Activated B cell treated with CpG ODN at 0.5 μM for 24 hours (primary cell): ENCODE measurements at regions of chr2 and their contacts with region 1.

Region 1: GRCh38 chr2:96760036-96760985 is at the start of gene CNNM4:
- DNase-seq: peak; percentile 89
- ATAC-seq: peak; percentile 91
- H3K4me3 Mint-ChIP-seq: peak within 1 kb of the TSS; percentile 90
- H3K27ac Mint-ChIP-seq: peak within 1 kb of the TSS; percentile 89
- H3K4me1 Mint-ChIP-seq: peaks cover 49% of the 10 kb centered on the region
- H3K27me3 Mint-ChIP-seq: no peaks in the 10 kb centered on the region
- CTCF ChIP-seq: no peak
- total RNA-seq, gene CNNM4: 7.4 and 10.0 TPM in 2 replicates

Region 2: DNA sequence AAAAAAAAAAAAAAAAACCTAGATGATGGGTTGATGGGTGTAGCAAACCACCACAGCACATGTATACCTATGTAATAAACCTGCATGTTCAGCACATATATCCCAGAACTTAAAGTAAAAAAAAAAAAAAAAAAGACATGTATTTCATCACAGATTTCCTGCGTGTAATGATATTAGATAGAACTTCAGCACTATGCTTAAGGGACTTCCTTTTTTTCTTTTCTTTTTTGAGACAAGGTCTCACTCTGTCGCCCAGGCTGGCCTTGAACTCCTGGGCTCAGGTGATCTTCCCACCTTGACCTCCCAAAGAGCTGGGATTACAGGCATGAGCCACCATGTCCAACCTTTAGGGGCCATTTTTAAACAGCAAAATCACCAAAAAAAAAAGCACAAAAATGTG is 297.2 kb before region 1 on chr2:
- CTCF ChIA-PET with region 1: no interaction called
- POLR2A ChIA-PET with region 1: no interaction called
- intact Hi-C with region 1: no loop called
- DNase-seq: no peak
- ATAC-seq: no peak
- H3K4me3 Mint-ChIP-seq: no peak overlapping the region
- H3K27ac Mint-ChIP-seq: no peak overlapping the region
- H3K4me1 Mint-ChIP-seq: no peaks in the 10 kb centered on the region
- H3K27me3 Mint-ChIP-seq: no peaks in the 10 kb centered on the region
- CTCF ChIP-seq: no peak

Region 3: DNA sequence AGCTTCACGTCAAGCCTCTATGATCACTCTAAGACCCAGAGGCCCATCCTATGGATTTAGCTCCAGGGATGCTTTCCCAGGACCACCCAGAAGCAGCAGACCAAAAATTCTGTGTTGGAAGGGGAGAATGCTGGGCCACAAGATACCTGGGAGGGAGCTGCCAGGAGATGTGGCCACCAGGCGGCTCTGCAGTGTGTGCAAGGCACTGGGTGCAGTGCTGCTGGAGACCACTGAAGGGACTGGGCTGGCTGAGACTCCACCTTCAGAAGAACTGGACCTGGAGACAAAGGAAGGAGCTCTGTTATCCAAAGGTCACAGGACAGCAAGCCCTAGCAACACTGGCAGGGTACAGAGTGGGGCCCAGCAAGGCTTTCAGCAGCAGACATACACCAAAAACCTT is 156.2 kb before region 1 on chr2:
- CTCF ChIA-PET with region 1: no interaction called
- POLR2A ChIA-PET with region 1: no interaction called
- intact Hi-C with region 1: no loop called
- DNase-seq: no peak
- ATAC-seq: no peak
- H3K4me3 Mint-ChIP-seq: no peak overlapping the region
- H3K27ac Mint-ChIP-seq: no peak overlapping the region
- H3K4me1 Mint-ChIP-seq: no peaks in the 10 kb centered on the region
- H3K27me3 Mint-ChIP-seq: no peaks in the 10 kb centered on the region
- CTCF ChIP-seq: no peak

Region 4: GRCh38 chr2:96638144-96639121 is 121.9 kb before region 1 on chr2 and contains the start of gene KANSL3:
- CTCF ChIA-PET with region 1: no interaction called
- POLR2A ChIA-PET with region 1: interaction called, 14 read pairs
- intact Hi-C with region 1: loop called (anchors 1 kb)
- DNase-seq: peak; percentile 94
- ATAC-seq: peak; percentile 90
- H3K4me3 Mint-ChIP-seq: peak within 1 kb of the TSS; percentile 93
- H3K27ac Mint-ChIP-seq: peak within 1 kb of the TSS; percentile 87
- H3K4me1 Mint-ChIP-seq: peaks cover 36% of the 10 kb centered on the region
- H3K27me3 Mint-ChIP-seq: no peaks in the 10 kb centered on the region
- CTCF ChIP-seq: no peak
- total RNA-seq, gene KANSL3: 24.6 and 31.4 TPM in 2 replicates

Region 5: DNA sequence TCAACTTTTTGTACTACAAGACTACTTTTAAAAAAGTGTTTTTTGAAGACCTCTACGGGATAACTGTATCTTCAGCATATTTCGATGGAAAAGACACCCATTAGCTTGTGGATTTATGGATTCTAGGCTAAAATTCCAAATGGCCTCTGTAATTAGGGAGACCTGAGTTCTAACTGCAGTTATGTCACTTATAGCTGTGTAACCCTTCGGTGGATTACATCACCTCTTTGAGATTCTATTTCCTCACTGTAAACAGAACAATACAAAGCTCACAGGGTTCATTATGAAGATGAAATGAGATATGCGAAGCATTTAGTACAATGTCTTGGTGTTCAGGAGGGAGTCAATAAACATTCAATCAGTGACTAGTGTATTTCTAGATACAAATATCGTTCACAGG is 44.7 kb before region 1 on chr2:
- CTCF ChIA-PET with region 1: no interaction called
- POLR2A ChIA-PET with region 1: no interaction called
- intact Hi-C with region 1: no loop called
- DNase-seq: no peak
- ATAC-seq: no peak
- H3K4me3 Mint-ChIP-seq: no peak overlapping the region
- H3K27ac Mint-ChIP-seq: no peak overlapping the region
- H3K4me1 Mint-ChIP-seq: no peaks in the 10 kb centered on the region
- H3K27me3 Mint-ChIP-seq: no peaks in the 10 kb centered on the region
- CTCF ChIP-seq: no peak

Region 6: GRCh38 chr2:96739633-96740428 is 20.5 kb before region 1 on chr2 and contains the start of gene LMAN2L:
- CTCF ChIA-PET with region 1: interaction called, 4 read pairs
- POLR2A ChIA-PET with region 1: interaction called, 14 read pairs
- intact Hi-C with region 1: loop called (anchors 1 kb)
- DNase-seq: peak; percentile 88
- ATAC-seq: peak; percentile 99
- H3K4me3 Mint-ChIP-seq: peak within 1 kb of the TSS; percentile 98
- H3K27ac Mint-ChIP-seq: peak within 1 kb of the TSS; percentile 94
- H3K4me1 Mint-ChIP-seq: peaks cover 33% of the 10 kb centered on the region
- H3K27me3 Mint-ChIP-seq: no peaks in the 10 kb centered on the region
- CTCF ChIP-seq: no peak
- total RNA-seq, gene LMAN2L: 7.1 and 8.9 TPM in 2 replicates

Region 7: DNA sequence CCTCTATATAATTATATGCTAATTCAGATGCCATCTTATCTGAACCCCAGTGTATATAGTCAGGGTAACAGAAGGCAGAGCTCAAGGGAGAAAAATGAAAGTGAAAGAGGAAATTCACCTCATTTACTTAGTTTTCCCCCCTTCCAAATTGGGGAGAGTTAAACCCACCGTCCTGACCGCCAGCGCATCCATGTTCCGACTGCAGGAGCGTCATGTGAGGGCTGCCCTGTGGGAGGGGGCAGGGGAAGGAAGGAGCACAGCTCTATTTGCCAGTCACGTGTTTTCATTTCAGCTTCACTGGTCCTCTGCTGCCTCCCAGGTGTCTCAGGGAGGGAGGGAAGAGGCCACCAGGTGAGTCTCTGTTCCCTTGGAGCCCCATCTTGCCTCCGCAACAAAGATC is 13.6 kb after region 1 on chr2:
- CTCF ChIA-PET with region 1: interaction called, 17 read pairs
- POLR2A ChIA-PET with region 1: interaction called, 40 read pairs
- intact Hi-C with region 1: no loop called
- DNase-seq: peak; percentile 32
- ATAC-seq: peak; percentile 56
- H3K4me3 Mint-ChIP-seq: peak overlapping the region; percentile 88
- H3K27ac Mint-ChIP-seq: peak overlapping the region; percentile 91
- H3K4me1 Mint-ChIP-seq: peaks cover 57% of the 10 kb centered on the region
- H3K27me3 Mint-ChIP-seq: no peaks in the 10 kb centered on the region
- CTCF ChIP-seq: no peak

Region 8: DNA sequence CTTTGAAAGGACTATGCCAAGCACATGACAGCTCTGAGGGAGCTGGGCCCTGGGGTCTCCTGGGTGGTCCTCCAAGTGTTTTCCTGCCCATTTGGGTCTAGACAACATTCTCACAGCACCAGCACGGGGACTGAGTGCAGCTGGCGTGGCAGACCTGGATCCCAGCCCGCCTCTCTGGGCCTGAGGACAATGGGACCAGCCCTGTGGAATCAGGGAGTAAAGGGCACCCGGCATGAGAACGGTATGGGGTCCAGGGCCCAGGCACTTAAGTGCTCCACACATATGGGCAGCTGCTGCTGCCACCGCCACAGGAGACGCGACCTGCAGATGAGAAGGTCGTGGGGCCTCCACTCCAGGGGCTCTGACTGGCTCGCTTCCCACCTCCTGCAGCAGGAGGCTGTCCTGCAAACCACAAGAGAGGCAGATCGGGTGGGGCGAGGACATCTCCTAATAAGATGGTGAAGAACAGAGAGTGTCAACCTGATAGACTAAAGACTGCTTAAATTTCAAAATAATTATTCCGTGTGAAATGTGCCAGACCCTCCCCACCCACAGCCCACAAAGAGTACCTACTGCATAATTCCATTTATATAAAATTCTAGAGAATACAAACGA is 179.8 kb after region 1 on chr2:
- CTCF ChIA-PET with region 1: no interaction called
- POLR2A ChIA-PET with region 1: no interaction called
- intact Hi-C with region 1: no loop called
- DNase-seq: no peak
- ATAC-seq: no peak
- H3K4me3 Mint-ChIP-seq: no peak overlapping the region
- H3K27ac Mint-ChIP-seq: no peak overlapping the region
- H3K4me1 Mint-ChIP-seq: peaks cover 7% of the 10 kb centered on the region
- H3K27me3 Mint-ChIP-seq: peaks cover 2% of the 10 kb centered on the region
- CTCF ChIP-seq: no peak